Activated CD8-positive, alpha-beta memory T cell treated with anti-CD3 and anti-CD28 coated beads, Interleukin-2, amount 10 ng/mL, durations not matched to agents 7 days and 5 days (primary cell): ENCODE measurements at regions of chr11 and their contacts with region 1.

Region 1: GRCh38 chr11:96447208-96448110 is 57.6 kb downstream of the JRKL start:
- DNase-seq: no peak
- ATAC-seq: no peak
- H3K4me3 Mint-ChIP-seq: no peak overlapping the region
- H3K27ac Mint-ChIP-seq: no peak overlapping the region
- H3K4me1 Mint-ChIP-seq: no peaks in the 10 kb centered on the region
- H3K27me3 Mint-ChIP-seq: peaks cover 22% of the 10 kb centered on the region

Region 2: DNA sequence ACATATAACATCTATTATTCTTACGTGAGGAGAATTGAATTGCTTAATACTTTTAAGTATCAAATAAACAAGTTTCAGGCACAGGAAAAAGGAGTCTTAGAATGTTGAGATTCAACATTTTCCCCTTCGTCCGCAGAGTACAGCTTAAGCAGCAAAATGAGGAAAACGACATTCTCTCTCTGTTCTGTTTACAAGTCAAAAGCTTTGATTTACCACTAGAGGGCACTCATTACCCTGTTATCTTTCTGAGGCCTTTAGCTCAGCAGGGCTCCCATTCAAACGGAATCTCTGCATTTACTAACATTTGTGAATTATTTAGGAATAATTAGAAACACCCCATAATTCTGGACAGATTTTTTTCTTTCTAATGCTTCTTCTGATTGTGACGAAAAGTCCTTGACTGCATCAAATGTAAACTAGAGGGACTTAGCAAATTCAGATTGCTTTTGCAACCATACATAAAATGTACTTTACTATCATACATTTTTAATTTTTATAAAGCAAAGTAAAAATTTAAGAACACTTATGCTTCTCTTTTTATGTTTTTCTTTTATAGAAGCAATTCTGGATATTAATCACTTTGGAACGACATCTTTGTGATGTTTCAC is 17.3 kb after region 1 on chr11:
- CTCF ChIA-PET with region 1: interaction called, 24 read pairs
- DNase-seq: no peak
- ATAC-seq: peak; percentile 87
- H3K4me3 Mint-ChIP-seq: no peak overlapping the region
- H3K27ac Mint-ChIP-seq: no peak overlapping the region
- H3K4me1 Mint-ChIP-seq: peaks cover 1% of the 10 kb centered on the region
- H3K27me3 Mint-ChIP-seq: peaks cover 12% of the 10 kb centered on the region